H1 (cell line): ENCODE measurements at regions of chr6 and their contacts with region 1.

Region 1: DNA sequence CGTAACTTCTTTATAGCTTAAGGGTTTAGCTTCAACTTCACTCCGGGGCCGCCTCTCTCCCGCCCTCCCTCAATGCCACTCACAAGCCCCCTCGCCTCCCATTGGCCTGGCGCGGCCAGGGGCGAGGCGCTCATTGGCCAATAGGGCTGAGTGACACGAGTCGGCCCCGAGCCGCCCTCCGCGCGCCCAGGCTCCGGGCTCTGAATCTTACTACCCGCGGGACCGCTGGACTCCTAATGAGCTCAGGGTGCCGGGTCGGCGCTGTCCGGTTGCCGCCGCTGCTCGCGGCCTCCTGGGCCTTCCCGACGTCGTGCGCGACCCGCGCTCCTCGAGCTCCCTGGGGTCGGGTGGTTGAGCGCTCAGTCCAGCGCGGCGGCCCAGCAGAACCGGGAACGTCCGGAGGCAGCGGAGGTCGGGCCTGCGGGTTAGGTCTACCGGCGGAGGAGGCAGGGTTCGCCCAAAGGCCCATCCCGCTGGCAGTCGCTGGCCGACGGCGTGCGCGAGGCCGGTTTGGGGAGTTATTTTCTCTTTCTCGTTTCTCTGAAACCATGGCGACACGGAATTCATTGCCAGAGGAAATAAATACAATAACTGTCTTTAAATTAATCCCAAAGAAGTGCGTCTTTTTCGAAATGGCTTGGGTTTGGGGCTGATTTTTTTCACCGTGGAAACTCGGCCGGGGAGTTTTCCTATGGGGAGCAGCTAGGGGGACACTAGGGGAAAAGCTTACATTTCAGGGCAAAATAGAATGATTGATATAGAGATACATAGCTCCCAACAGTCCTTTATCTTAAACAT is at the start of gene SIM1:
- DNase-seq: peak; percentile 75 to 92
- H3K4me3 ChIP-seq: peak within 1 kb of the TSS; percentile 25 to 56 (median 28); a peak in 7 of 8 replicates
- H3K27ac ChIP-seq: no peak within 1 kb of the TSS
- H3K4me1 ChIP-seq: peaks cover 13 to 36% (median 15%) of the 10 kb centered on the region in 4 experiments
- H3K27me3 ChIP-seq: peaks cover 86 to 100% (median 93%) of the 10 kb centered on the region in 4 experiments
- CTCF ChIP-seq: no peak
- EP300 ChIP-seq: no peak
- POLR2A ChIP-seq: no peak
- RAD21 ChIP-seq: no peak
- total RNA-seq, gene SIM1: 0.39 and 0.61 TPM in 2 replicates

Region 2: DNA sequence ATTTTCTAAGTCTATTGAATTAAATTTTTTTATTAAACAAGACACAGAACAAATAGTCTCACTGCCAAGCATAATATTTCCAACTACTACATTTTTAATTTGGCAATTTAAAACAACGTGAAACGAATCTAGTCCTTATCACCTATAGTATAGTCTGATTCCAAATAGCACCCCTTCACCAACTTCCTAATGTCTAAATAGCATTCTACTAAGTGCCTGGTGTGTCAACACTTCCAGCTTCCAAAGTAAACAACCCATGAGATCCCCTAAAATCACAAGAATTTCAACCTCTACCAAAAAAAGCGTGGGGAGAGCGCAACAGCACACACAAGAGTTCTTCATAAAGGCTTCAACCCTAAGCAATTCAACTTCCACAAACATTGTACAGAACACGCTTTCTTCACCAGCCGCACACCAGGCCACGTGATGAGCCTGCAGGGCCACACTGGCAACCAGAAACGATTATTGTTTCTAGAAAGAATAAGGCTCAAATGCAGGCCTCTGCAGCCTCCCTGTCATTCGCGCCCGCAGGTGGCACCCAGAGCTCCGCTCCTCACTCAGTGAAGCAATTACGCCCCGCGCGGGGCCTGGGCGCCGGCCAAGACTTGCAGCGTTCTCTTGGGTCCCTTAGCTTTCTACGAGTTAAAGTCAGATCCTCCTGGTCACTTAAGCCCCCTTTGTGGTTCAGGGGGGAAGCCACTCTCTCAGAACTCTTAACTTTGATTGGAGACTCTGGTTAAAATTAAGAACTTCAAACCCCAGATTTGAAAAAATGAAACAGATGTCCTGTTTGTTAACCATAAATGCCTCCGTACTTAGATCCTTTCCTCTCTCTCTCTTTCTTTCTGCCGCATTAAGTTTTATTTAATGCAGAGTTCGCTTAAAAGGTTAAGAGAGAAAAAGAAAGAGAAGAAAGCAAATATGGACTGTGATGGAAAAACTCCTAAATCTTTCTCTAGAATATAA is 18.7 kb before region 1 on chr6:
- CTCF ChIA-PET with region 1: interaction called, 215 read pairs
- POLR2A ChIA-PET with region 1: interaction called, 16 read pairs
- DNase-seq: peak in 1 of 2 experiments; percentile 67
- H3K4me3 ChIP-seq: peak overlapping the region in 2 of 4 experiments; percentile 22 to 54; a peak in 4 of 8 replicates
- H3K27ac ChIP-seq: no peak overlapping the region
- H3K4me1 ChIP-seq: peaks cover 14 to 29% (median 19%) of the 10 kb centered on the region in 4 experiments
- H3K27me3 ChIP-seq: peaks cover 59 to 68% (median 64%) of the 10 kb centered on the region in 4 experiments
- CTCF ChIP-seq: peak in 2 of 3 experiments; percentile 8 to 13; a peak in 1 of 4 replicates
- EP300 ChIP-seq: no peak
- POLR2A ChIP-seq: no peak
- RAD21 ChIP-seq: peak; percentile 16 to 27; a peak in 3 of 4 replicates

Region 3: DNA sequence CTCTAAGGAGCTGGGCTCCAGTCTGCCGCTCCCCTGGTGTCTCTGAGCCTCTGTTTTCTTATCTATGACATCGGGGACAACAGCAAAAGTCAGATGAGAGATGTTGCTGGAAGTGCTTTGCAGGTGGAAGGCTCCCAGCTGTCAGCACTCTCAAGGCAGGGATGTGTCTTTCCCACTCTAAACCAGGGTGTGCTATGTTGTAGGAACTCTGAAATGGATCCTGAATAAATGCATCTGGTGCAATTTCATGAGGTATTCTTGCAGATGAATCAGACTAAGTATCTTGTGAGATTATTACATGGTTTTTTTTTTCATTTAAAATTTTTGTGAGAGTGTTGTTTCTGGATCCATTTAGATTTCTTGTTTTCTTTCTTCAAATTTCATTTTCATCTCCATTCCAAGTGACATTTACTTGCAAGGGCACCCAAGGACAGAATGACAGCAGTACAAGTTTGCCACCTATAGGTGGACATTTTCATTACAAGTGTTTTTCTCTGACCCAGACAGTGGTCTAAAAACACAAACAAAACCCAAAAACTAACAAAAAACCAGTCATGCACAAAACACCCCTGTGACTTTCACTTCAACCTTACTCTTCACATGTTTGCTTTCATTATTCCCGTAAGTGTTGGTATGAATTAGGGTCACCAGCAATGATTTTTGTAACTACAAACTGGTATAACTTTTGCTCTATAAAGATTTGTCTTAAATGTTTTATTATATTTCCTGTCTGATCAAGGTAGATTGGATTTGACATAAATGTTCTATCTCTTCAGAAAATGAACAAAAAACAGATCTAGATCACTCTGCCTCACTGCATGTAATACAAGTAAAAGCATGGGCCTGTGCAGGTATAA is 14.3 kb after region 1 on chr6:
- CTCF ChIA-PET with region 1: interaction called, 12 read pairs
- POLR2A ChIA-PET with region 1: no interaction called
- DNase-seq: no peak
- H3K4me3 ChIP-seq: no peak overlapping the region
- H3K27ac ChIP-seq: no peak overlapping the region
- H3K4me1 ChIP-seq: no peaks in the 10 kb centered on the region
- H3K27me3 ChIP-seq: no peaks in the 10 kb centered on the region
- CTCF ChIP-seq: peak in 2 of 3 experiments; percentile 57 to 70; a peak in 3 of 4 replicates
- EP300 ChIP-seq: no peak
- POLR2A ChIP-seq: no peak
- RAD21 ChIP-seq: peak; percentile 90 to 92